ENCODE measurements at regions of chr3 and their contacts with region 1.

Region 1: GRCh38 chr3:11803977-11804892 is 42.5 kb downstream of the TAMM41 start:
- DNase-seq: peak; percentile 50 to 54
- H3K4me3 ChIP-seq: no peak overlapping the region
- H3K27ac ChIP-seq: no peak overlapping the region
- H3K4me1 ChIP-seq: no peaks in the 10 kb centered on the region
- H3K27me3 ChIP-seq: no peaks in the 10 kb centered on the region
- CTCF ChIP-seq: peak in 5 of 6 experiments; percentile 44 to 85 (median 70)
- POLR2A ChIP-seq: no peak

Region 2: GRCh38 chr3:11651900-11652299 is 152.3 kb before region 1 on chr3:
- intact Hi-C with region 1: loop called (anchors 5 kb)
- DNase-seq: no peak
- H3K4me3 ChIP-seq: no peak overlapping the region
- H3K27ac ChIP-seq: no peak overlapping the region
- H3K4me1 ChIP-seq: peaks cover 5% of the 10 kb centered on the region in 2 donors
- H3K27me3 ChIP-seq: no peaks in the 10 kb centered on the region
- CTCF ChIP-seq: peak; percentile 15 to 65 (median 42)
- POLR2A ChIP-seq: no peak